B cell (primary cell): ENCODE measurements at regions of chr2 and their contacts with region 1.

Region 1: DNA sequence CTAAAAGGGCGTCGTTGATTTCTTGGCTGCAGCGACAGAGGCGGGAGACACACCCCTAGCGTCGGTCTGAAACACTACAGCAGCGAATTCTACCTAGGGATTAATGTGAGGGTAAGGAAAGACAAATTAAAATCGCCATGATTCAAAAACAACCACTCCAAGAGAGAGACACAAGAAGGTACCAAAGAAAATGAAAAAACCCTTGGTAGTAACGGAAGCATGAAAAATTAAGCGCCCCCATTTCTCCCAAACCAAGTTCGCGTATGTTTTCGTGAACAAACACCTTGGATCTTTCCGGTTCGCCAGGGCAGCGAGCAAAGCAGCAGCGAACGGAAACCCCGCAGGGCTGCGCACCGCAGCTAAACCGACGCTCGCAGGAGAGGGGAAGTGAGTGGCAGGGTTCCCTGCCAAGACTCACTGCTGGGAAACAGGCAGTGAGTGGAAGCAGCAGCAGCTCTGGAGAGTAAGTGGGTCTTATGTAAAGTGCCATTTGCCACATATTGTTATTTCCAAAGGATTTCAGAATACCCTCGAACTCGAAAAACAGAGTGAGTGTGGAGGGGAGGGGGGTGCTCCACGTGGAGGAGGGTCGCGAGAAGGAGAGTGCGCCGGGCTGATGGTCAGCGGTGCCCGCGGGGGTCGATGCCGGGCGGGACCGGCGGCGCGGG is 1.0 kb downstream of the PPP3R1 start:
- DNase-seq: peak; percentile 92
- ATAC-seq: peak; percentile 60
- H3K4me3 ChIP-seq: peak overlapping the region; percentile 76 to 97 (median 96)
- H3K4me3 Mint-ChIP-seq: peak overlapping the region; percentile 90
- H3K27ac ChIP-seq: peak overlapping the region; percentile 86 to 92
- H3K27ac Mint-ChIP-seq: peak overlapping the region; percentile 93
- H3K4me1 ChIP-seq: peaks cover 39 to 55% of the 10 kb centered on the region in 2 donors
- H3K4me1 Mint-ChIP-seq: peaks cover 36% of the 10 kb centered on the region
- H3K27me3 ChIP-seq: no peaks in the 10 kb centered on the region
- H3K27me3 Mint-ChIP-seq: no peaks in the 10 kb centered on the region
- CTCF ChIP-seq: peak; percentile 77

Region 2: DNA sequence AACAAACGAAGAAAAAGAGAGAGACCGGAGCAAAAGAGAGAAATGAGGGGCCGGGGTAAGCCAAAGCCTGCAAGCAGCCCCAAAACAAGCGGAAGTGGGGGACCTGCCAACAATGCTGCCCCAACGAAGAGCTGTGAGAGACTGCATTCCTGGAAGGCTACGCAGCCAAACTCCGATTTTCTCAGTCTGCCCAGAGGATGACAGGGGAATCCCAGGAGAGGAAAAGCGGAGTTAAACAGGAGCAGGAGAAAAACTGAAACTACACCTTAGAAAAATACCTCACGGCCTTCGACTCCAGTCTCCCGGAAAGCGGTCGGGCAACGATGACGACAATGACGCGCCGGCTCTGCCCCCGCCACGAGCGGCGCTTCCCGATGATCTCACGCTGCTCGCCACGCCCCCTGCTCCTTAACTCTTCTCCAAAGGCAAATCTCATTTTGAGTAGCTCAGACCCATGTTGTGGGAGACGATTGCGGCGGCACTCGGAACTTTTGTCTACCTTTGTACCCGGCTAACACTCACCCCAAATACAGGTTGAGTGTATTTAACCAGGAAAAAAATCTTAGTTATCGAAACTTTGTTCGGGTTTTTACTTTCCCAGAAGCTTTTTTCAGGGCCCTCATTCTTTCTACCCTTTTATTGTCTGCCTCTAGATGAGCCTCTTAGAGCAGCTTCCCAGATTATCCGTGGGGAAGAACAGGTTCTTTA is 188.5 kb before region 1 on chr2 and contains the start of gene C1D:
- CTCF ChIA-PET with region 1: no interaction called
- POLR2A ChIA-PET with region 1: no interaction called
- intact Hi-C with region 1: loop called (anchors 2 kb)
- DNase-seq: peak; percentile 95
- ATAC-seq: peak; percentile 96
- H3K4me3 ChIP-seq: peak within 1 kb of the TSS; percentile 87 to 97 (median 96)
- H3K4me3 Mint-ChIP-seq: peak within 1 kb of the TSS; percentile 95
- H3K27ac ChIP-seq: peak within 1 kb of the TSS; percentile 88 to 96
- H3K27ac Mint-ChIP-seq: peak within 1 kb of the TSS; percentile 96
- H3K4me1 ChIP-seq: peaks cover 20 to 30% of the 10 kb centered on the region in 2 donors
- H3K4me1 Mint-ChIP-seq: peaks cover 40% of the 10 kb centered on the region
- H3K27me3 ChIP-seq: no peaks in the 10 kb centered on the region
- H3K27me3 Mint-ChIP-seq: peaks cover 6% of the 10 kb centered on the region
- CTCF ChIP-seq: no peak
- total RNA-seq, gene C1D: 20.1 and 24.8 TPM in 2 replicates